ENCODE measurements at regions of chr16 and their contacts with region 1.

Region 1: DNA sequence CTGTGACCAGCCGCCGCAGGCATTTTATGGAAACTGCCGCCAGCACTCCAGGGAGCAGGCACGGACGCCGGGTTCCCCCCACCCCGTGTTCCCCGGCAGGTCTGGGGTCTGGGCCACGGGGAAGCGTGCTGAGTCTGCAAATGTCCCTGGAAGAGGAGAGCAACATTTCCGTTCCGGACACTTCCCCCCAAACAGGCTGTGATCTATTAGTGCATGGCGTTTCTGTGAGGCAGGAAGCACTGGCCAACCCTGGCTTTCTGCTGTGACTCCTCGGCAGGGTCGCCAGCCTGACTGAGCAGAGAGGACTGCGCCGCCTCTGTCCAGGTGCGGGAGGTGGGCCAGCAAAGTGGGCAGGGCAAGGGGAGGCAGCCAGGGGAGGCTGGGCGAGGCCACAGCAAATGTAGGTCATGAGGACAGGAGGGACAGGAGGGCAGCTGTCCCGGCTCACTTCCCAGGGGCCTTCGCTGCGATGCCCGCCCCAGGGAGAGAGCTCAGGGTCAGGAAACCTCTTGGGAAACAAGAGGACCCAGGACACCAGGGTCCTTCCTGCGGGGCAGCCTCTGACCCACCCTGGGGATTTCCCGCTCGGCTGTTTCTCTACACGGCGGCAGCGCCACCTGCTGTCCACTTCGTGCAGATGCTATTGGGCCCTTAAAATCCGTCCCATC is 9.5 kb downstream of the FOXF1 start:
- DNase-seq: peak; percentile 81
- ATAC-seq: no peak
- H3K4me3 ChIP-seq: no peak overlapping the region
- H3K4me3 Mint-ChIP-seq: no peak overlapping the region
- H3K27ac ChIP-seq: no peak overlapping the region
- H3K27ac Mint-ChIP-seq: no peak overlapping the region
- H3K4me1 ChIP-seq: peaks cover 7 to 14% of the 10 kb centered on the region in 2 donors
- H3K4me1 Mint-ChIP-seq: peaks cover 8% of the 10 kb centered on the region
- H3K27me3 ChIP-seq: peaks cover 0 to 75% (median 35%) of the 10 kb centered on the region in 4 experiments
- H3K27me3 Mint-ChIP-seq: peaks cover 51% of the 10 kb centered on the region
- CTCF ChIP-seq: peak; percentile 99

Region 2: GRCh38 chr16:86072328-86073102 is 447.3 kb before region 1 on chr16:
- CTCF ChIA-PET with region 1: interaction called, 4 read pairs
- POLR2A ChIA-PET with region 1: no interaction called
- intact Hi-C with region 1: loop called (anchors 2 kb)
- DNase-seq: peak; percentile 55
- ATAC-seq: no peak
- H3K4me3 ChIP-seq: no peak overlapping the region
- H3K4me3 Mint-ChIP-seq: no peak overlapping the region
- H3K27ac ChIP-seq: no peak overlapping the region
- H3K27ac Mint-ChIP-seq: no peak overlapping the region
- H3K4me1 ChIP-seq: no peaks in the 10 kb centered on the region
- H3K4me1 Mint-ChIP-seq: no peaks in the 10 kb centered on the region
- H3K27me3 ChIP-seq: peaks cover 0 to 34% (median 8%) of the 10 kb centered on the region in 4 experiments
- H3K27me3 Mint-ChIP-seq: peaks cover 37% of the 10 kb centered on the region
- CTCF ChIP-seq: peak; percentile 77

Region 3: DNA sequence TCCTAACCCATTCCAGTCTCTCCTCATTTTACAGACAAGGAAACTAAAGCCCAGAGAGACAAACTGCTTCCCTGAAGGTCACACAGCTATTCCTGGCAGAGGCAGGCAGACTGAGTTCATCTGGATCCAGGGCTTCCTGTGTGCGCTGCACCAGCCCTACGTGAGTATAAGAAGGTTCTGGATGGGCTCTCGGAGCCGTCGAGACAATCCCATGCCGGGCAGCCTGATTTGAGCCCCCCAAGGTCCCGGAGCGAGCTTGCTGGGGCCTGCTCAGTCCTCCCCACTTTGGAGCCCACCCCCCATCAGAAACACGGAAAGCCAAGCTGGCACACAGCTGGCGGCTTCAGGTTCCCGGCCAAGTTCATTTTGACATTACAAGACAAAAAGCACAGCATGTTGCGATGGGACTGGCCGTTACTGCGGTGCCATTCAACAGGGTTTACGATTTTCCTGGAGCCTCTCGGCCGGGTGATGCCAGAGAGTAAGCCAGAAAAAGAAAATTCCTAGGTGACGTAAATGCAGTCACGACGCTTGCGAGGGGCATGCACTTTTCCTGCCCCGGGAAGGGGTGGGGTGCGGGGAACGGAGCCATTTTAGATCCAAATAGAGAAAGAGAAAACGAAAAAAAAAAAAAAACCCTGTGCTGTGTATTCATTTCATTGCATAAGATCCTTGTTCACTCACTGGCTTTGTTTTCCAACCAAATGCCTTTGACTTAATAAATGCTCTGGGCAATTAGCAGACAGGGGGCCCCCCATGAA is 176.6 kb before region 1 on chr16:
- CTCF ChIA-PET with region 1: no interaction called
- POLR2A ChIA-PET with region 1: no interaction called
- intact Hi-C with region 1: loop called (anchors 5 kb)
- DNase-seq: no peak
- ATAC-seq: no peak
- H3K4me3 ChIP-seq: no peak overlapping the region
- H3K4me3 Mint-ChIP-seq: no peak overlapping the region
- H3K27ac ChIP-seq: no peak overlapping the region
- H3K27ac Mint-ChIP-seq: no peak overlapping the region
- H3K4me1 ChIP-seq: no peaks in the 10 kb centered on the region
- H3K4me1 Mint-ChIP-seq: no peaks in the 10 kb centered on the region
- H3K27me3 ChIP-seq: peaks cover 0 to 27% (median 11%) of the 10 kb centered on the region in 4 experiments
- H3K27me3 Mint-ChIP-seq: peaks cover 48% of the 10 kb centered on the region
- CTCF ChIP-seq: no peak

Region 4: DNA sequence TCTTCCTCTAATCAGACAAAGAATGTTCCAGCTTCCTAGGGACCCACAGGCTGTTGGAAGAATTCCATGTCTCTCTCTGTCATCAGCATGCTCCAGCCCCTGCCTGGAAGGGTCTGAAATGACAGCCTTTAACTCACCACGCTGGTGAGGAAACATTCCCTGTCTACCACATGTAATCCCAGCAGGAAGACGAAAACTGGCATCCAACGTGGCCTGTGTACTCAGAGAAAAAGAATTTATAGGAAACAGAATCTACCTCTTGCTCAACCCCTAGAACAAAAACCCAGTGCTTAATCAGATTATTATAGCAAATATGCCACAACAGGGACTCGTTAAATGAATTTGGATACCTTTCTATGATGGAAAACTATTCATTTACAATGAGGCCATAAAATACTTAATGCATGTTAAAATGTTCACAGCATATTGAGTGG is 156.7 kb before region 1 on chr16:
- CTCF ChIA-PET with region 1: no interaction called
- POLR2A ChIA-PET with region 1: no interaction called
- intact Hi-C with region 1: no loop called
- DNase-seq: no peak
- ATAC-seq: no peak
- H3K4me3 ChIP-seq: no peak overlapping the region
- H3K4me3 Mint-ChIP-seq: no peak overlapping the region
- H3K27ac ChIP-seq: no peak overlapping the region
- H3K27ac Mint-ChIP-seq: no peak overlapping the region
- H3K4me1 ChIP-seq: no peaks in the 10 kb centered on the region
- H3K4me1 Mint-ChIP-seq: no peaks in the 10 kb centered on the region
- H3K27me3 ChIP-seq: peaks cover 0 to 11% (median 0%) of the 10 kb centered on the region in 4 experiments
- H3K27me3 Mint-ChIP-seq: peaks cover 47% of the 10 kb centered on the region
- CTCF ChIP-seq: no peak